GM12878 (cell line): ENCODE measurements at regions of chr6 and their contacts with region 1.

Region 1: GRCh38 chr6:108835218-108835850 is 12.9 kb upstream of the ARMC2 start:
- DNase-seq: peak; percentile 8
- ATAC-seq: peak; percentile 100
- H3K4me3 ChIP-seq: no peak overlapping the region
- H3K27ac ChIP-seq: no peak overlapping the region
- H3K4me1 ChIP-seq: no peaks in the 10 kb centered on the region
- H3K27me3 ChIP-seq: peaks cover 0 to 3% of the 10 kb centered on the region in 2 experiments; a peak in 3 of 4 replicates
- CTCF ChIP-seq: peak; percentile 71 to 91 (median 84)
- EP300 ChIP-seq: no peak; a peak in 1 of 4 replicates
- POLR2A ChIP-seq: no peak
- RAD21 ChIP-seq: peak; percentile 71

Region 2: GRCh38 chr6:107811591-107812218 is 1023.6 kb before region 1 on chr6:
- CTCF ChIA-PET with region 1: no interaction called
- POLR2A ChIA-PET with region 1: no interaction called
- RAD21 ChIA-PET with region 1: no interaction called
- SMC1A ChIA-PET with region 1: no interaction called
- in situ Hi-C with region 1: no loop called
- intact Hi-C with region 1: no loop called
- DNase-seq: no peak
- ATAC-seq: peak; percentile 61
- H3K4me3 ChIP-seq: no peak overlapping the region
- H3K27ac ChIP-seq: no peak overlapping the region
- H3K4me1 ChIP-seq: no peaks in the 10 kb centered on the region
- H3K27me3 ChIP-seq: peaks cover 3% of the 10 kb centered on the region in 2 experiments; a peak in 2 of 4 replicates
- CTCF ChIP-seq: no peak
- EP300 ChIP-seq: no peak
- POLR2A ChIP-seq: no peak
- RAD21 ChIP-seq: no peak

Region 3: DNA sequence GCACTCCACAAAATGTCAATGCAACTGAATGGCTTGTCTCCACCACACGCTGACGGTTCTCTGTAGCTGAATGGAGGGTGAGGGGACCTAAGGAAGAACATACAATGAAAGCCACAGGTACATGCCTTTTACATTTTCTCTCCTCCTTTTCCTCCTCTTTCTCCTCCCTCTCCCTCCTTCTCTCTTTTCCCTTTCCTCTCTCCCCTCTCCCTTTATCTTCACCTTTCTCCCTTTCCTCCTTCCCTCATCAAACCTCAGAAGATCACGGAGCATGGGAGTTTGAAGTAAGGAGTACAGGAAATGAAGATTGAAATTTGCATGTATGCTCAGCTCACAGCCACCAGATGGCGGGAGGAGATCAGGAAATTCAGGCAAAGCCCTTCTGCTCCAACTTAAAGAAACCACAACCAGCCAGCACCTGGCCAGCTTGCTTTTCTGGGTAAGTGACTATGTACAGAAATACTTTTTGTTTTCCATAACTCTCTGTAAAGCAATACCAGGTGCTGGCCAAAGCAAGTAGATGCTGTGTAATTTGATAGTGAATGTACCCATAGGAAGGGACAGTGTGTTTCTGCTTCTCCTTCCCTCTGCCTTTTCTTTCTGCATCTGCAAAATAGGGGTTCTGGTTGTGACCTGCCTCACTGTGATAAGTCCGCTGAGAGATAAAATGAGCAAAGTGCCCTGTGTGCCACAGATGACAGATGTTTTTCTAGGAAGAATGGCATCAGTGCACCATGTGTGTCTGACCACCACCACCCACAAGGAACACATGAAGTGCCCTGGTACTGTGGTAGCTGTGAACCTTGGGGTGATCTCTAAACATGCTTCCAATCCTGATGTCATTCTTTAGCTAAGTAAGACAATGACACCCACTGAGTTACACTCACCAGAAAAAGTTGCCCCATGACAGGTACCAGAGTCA is 293.2 kb before region 1 on chr6:
- CTCF ChIA-PET with region 1: interaction called, 44 read pairs
- POLR2A ChIA-PET with region 1: interaction called, 3 read pairs
- RAD21 ChIA-PET with region 1: interaction called, 8 read pairs
- SMC1A ChIA-PET with region 1: interaction called, 19 read pairs
- in situ Hi-C with region 1: loop called (anchors 5 kb)
- intact Hi-C with region 1: loop called (anchors 1 kb)
- DNase-seq: no peak
- ATAC-seq: peak; percentile 85
- H3K4me3 ChIP-seq: no peak overlapping the region
- H3K27ac ChIP-seq: no peak overlapping the region
- H3K4me1 ChIP-seq: no peaks in the 10 kb centered on the region
- H3K27me3 ChIP-seq: peaks cover 0 to 1% of the 10 kb centered on the region in 2 experiments; a peak in 2 of 4 replicates
- CTCF ChIP-seq: peak; percentile 76 to 91 (median 80)
- EP300 ChIP-seq: no peak
- POLR2A ChIP-seq: no peak
- RAD21 ChIP-seq: peak; percentile 95

Region 4: GRCh38 chr6:108673602-108674001 is 161.7 kb before region 1 on chr6:
- CTCF ChIA-PET with region 1: no interaction called
- POLR2A ChIA-PET with region 1: no interaction called
- RAD21 ChIA-PET with region 1: no interaction called
- SMC1A ChIA-PET with region 1: no interaction called
- in situ Hi-C with region 1: no loop called
- intact Hi-C with region 1: no loop called
- DNase-seq: no peak
- ATAC-seq: no peak
- H3K4me3 ChIP-seq: no peak overlapping the region
- H3K27ac ChIP-seq: no peak overlapping the region
- H3K4me1 ChIP-seq: peaks cover 13% of the 10 kb centered on the region
- H3K27me3 ChIP-seq: no peaks in the 10 kb centered on the region
- CTCF ChIP-seq: no peak
- EP300 ChIP-seq: no peak
- POLR2A ChIP-seq: no peak
- RAD21 ChIP-seq: no peak

Region 5: DNA sequence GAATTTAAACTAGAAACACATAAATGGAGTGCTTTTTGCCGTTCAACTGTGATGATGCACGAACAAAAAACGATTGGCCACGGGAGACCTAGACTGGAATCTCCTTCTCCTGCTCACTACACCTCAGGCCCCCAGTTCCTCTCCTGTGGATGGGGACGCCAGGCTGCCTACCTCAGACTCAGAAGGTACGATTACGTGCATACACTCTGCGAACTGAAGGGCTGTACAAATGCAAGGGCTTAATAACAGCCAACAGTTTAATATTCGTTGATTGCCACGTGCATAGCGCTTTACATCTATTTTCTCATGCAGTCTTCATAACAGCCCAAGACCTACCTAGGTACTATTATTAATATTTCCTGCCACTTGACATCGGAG is 12.4 kb after region 1 on chr6:
- CTCF ChIA-PET with region 1: interaction called, 18 read pairs
- POLR2A ChIA-PET with region 1: no interaction called
- RAD21 ChIA-PET with region 1: interaction called, 3 read pairs
- SMC1A ChIA-PET with region 1: interaction called, 7 read pairs
- in situ Hi-C with region 1: no loop called
- intact Hi-C with region 1: no loop called
- DNase-seq: no peak
- ATAC-seq: no peak
- H3K4me3 ChIP-seq: peak overlapping the region; percentile 61; the same call in 1 of the 2 replicates
- H3K27ac ChIP-seq: no peak overlapping the region
- H3K4me1 ChIP-seq: no peaks in the 10 kb centered on the region; the same call in 1 of the 2 replicates
- H3K27me3 ChIP-seq: peaks cover 3 to 14% of the 10 kb centered on the region in 2 experiments; a peak in 3 of 4 replicates
- CTCF ChIP-seq: no peak
- EP300 ChIP-seq: no peak
- POLR2A ChIP-seq: no peak
- RAD21 ChIP-seq: no peak

Region 6: GRCh38 chr6:108896111-108896661 is 60.9 kb after region 1 on chr6:
- CTCF ChIA-PET with region 1: interaction called, 9 read pairs
- POLR2A ChIA-PET with region 1: no interaction called
- RAD21 ChIA-PET with region 1: interaction called, 3 read pairs
- SMC1A ChIA-PET with region 1: no interaction called
- in situ Hi-C with region 1: no loop called
- intact Hi-C with region 1: loop called (anchors 5 kb)
- DNase-seq: no peak
- ATAC-seq: no peak
- H3K4me3 ChIP-seq: no peak overlapping the region
- H3K27ac ChIP-seq: no peak overlapping the region
- H3K4me1 ChIP-seq: no peaks in the 10 kb centered on the region
- H3K27me3 ChIP-seq: peaks cover 3 to 4% of the 10 kb centered on the region in 2 experiments; a peak in 2 of 4 replicates
- CTCF ChIP-seq: no peak
- EP300 ChIP-seq: peak in 1 of 2 experiments; percentile 34; a peak in 1 of 4 replicates
- POLR2A ChIP-seq: no peak
- RAD21 ChIP-seq: no peak

Region 7: GRCh38 chr6:108968325-108969316 is 133.3 kb after region 1 on chr6:
- CTCF ChIA-PET with region 1: no interaction called
- POLR2A ChIA-PET with region 1: no interaction called
- RAD21 ChIA-PET with region 1: no interaction called
- SMC1A ChIA-PET with region 1: no interaction called
- in situ Hi-C with region 1: no loop called
- intact Hi-C with region 1: no loop called
- DNase-seq: no peak
- ATAC-seq: no peak
- H3K4me3 ChIP-seq: no peak overlapping the region
- H3K27ac ChIP-seq: no peak overlapping the region
- H3K4me1 ChIP-seq: no peaks in the 10 kb centered on the region
- H3K27me3 ChIP-seq: peaks cover 0 to 2% of the 10 kb centered on the region in 2 experiments; a peak in 1 of 4 replicates
- CTCF ChIP-seq: no peak
- EP300 ChIP-seq: no peak
- POLR2A ChIP-seq: no peak
- RAD21 ChIP-seq: no peak